Prostate gland (tissue), 2 donors: ENCODE measurements at regions of chr19 and their contacts with region 1.

Region 1: GRCh38 chr19:19821366-19821951 is at the start of gene ZNF506:
- DNase-seq: peak; percentile 99
- H3K4me3 ChIP-seq: peak within 1 kb of the TSS; percentile 58 to 78
- H3K27ac ChIP-seq: peak within 1 kb of the TSS; percentile 83 to 98
- H3K4me1 ChIP-seq: no peaks in the 10 kb centered on the region
- H3K27me3 ChIP-seq: no peaks in the 10 kb centered on the region
- CTCF ChIP-seq: peak in 1 of 4 experiments; percentile 11
- POLR2A ChIP-seq: peak; percentile 73
- total RNA-seq, gene ZNF506: 35.7 to 37.2 TPM

Region 2: DNA sequence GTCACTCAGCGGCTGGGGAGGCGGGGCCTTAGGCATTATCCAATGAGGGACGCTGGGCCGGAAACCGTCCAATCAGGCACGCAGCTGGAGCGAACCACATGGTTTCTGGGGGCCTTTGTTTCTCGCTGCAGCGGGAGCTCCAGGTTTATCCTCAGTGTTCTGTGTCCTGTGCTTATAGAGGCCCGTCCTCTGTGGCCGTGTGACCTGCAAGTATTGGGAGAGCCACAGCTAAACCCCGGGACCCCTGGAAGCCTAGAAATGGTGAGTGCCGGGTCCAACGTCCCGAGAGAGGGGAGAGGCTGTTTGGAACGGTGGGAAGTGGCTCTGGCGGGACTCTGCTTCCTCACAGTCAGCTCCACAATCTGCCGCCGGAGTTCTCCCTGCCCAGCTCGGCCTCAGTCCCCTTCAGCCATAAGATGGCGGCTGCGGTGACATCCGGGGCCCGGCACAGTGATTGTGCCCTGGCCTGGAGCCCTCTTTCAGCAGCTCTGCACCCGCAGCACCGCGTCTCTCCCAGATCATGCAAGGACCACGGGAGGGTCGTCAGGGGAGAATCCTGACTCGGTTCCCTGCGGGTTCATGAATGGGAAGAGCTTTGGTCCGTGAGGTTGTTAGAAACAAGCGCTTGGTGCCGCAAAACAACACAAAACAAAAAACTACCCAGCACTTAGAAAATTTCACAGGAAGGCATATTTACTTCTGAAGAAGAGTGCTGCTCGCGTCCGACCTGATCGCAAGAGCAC is 44.5 kb after region 1 on chr19 and contains the start of gene ZNF253:
- intact Hi-C with region 1: loop called (anchors 5 kb)
- DNase-seq: peak; percentile 98
- H3K4me3 ChIP-seq: peak within 1 kb of the TSS; percentile 59 to 66
- H3K27ac ChIP-seq: peak within 1 kb of the TSS; percentile 92 to 95
- H3K4me1 ChIP-seq: no peaks in the 10 kb centered on the region
- H3K27me3 ChIP-seq: no peaks in the 10 kb centered on the region
- CTCF ChIP-seq: no peak
- POLR2A ChIP-seq: peak; percentile 83
- total RNA-seq, gene ZNF253: 10.6 to 20.0 TPM

Region 3: DNA sequence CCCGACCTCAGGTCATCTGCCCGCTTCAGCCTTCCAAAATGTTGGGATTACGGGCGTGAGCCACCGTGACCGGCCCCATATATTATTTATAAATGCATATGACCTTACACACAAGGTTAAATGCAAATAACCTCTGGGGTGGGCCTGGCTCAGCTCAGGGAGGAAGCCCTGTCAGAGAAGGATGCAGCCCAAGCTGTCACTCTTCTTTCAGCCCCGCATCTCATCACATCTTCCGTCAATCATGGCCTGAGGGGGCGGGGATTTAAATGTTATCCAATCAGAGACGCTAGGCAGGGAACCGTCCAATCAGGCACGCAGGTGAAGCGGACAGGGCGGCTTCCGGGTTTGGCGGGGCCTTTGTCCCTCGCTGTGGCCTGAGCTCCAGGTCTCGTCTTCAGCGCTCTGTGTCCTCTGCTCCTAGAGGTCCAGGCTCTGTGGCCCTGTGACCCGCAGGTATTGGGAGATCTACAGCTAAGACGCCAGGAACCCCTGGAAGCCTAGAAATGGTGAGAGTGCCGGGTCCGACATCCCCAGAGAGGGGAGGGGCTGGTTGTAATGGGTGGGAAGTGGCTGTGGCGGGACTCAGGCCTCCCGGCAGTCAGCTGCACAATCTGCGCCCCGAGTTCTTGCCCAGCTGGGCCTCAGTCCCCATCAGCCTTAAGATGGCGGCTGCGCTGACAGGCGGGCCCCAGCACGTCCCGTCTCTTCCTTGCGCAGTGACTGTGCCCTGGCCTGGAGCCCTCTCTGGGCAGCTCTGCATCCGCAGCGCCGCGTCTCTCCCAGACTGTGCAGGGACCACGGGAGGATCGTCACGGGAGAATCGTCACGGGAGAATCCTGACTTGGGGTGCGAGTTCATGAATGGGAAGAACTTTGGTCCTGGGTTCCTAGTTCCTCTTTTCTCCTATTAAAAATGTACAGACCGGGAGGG is 1199.1 kb after region 1 on chr19 and contains the start of gene ZNF430:
- intact Hi-C with region 1: loop called (anchors 5 kb)
- DNase-seq: peak; percentile 94
- H3K4me3 ChIP-seq: peak within 1 kb of the TSS; percentile 58 to 62
- H3K27ac ChIP-seq: peak within 1 kb of the TSS; percentile 83 to 87
- H3K4me1 ChIP-seq: no peaks in the 10 kb centered on the region
- H3K27me3 ChIP-seq: no peaks in the 10 kb centered on the region
- CTCF ChIP-seq: no peak
- POLR2A ChIP-seq: peak; percentile 64
- total RNA-seq, gene ZNF430: 9.3 to 11.9 TPM